Activated T-helper 1 cell treated with anti-CD3 and anti-CD28 coated beads, Interleukin-12 subunit alpha, Interleukin-12 subunit beta, Interleukin-2, Interleukin-4 antibody, amounts not matched to agents 30 ng/mL and 10 ng/mL and 1 ng/mL, durations not matched to agents 14 hours and 24 hours and 36 hours (primary cell): ENCODE measurements at regions of chr17 and their contacts with region 1.

Region 1: DNA sequence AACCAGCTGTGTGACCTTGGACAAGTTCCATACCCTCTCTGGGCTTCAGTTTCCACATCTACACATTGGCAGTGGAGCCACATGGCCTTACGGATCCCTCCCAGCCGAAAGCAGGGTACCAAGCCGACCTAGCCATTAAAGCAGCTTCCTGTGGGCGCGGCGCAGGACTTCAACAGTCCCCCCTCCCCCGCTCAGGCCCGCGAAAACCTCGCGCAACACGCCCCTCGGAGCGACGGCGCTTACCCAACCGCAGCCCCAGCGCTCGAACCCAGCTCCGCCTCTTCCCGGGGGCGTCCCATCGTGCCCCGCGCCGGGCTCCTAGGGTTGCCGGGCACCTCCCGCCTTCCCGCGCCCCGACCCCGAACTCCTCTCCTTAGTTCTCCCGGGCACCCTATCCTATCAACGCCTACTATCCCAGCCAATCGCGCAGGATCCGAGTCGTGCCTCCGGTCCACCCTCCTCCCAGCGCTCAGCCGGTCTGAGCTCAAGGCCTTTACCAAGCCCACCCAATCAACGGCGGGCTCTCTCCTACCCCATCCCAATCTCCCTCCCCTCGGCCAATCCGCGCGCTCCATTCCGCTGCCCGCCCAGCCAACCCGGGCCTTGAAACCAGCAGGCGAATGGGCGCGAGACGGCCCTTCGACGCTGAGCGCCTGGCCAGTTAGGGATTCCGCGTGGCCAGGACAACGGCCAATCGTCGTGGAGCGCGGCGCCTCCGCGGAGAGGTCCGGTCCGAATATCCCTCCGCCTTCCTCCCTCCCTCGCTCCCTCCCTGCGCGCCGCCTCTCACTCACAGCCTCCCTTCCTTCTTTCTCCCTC is at the start of gene KPNB1:
- DNase-seq: peak; percentile 98
- H3K4me3 Mint-ChIP-seq: peak within 1 kb of the TSS; percentile 98
- H3K27ac Mint-ChIP-seq: peak within 1 kb of the TSS; percentile 96
- H3K4me1 Mint-ChIP-seq: peaks cover 33% of the 10 kb centered on the region
- H3K27me3 Mint-ChIP-seq: no peaks in the 10 kb centered on the region
- total RNA-seq, gene KPNB1: 718 and 719 TPM in 2 replicates

Region 2: GRCh38 chr17:47615766-47616424 is 33.5 kb before region 1 on chr17:
- intact Hi-C with region 1: loop called (anchors 1 kb)
- DNase-seq: no peak
- H3K4me3 Mint-ChIP-seq: no peak overlapping the region
- H3K27ac Mint-ChIP-seq: no peak overlapping the region
- H3K4me1 Mint-ChIP-seq: peaks cover 27% of the 10 kb centered on the region
- H3K27me3 Mint-ChIP-seq: no peaks in the 10 kb centered on the region

Region 3: DNA sequence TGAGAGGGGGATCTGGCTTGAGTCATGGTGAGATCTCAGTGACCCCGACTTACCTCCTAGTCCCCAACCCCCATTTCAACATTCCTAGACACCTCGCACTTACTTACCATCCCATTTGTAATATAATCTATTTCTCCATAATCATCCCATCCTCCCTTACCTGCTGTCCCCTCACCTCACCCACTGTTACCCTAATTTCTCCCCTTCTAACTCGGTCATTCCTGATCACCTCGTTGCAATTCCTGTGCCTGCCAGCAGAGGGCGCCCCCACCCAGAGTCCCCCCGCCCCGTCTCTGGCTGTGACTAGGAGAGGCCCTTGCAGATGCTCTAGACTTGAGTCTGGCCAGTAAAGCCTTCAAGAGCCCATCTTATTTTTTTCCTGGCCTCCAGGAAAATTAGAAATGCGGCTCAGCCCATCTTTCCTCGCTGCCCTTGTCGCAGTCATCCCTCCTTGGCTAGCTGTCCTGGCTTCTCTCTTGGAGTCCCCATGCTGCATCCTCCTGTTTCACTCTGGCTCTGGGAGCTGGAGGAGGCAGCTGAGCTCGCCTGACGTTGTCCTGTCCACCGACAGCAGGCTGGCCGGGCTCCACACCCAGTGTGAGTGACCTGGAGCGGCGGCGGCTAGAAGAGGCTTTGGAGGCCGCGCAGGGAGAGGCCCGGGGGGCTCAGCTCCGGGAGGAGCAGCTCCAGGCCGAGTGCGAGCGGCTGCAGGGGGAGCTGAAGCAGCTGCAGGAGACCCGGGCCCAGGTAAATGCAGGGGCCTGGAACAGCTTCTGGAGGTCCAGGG is 49.6 kb after region 1 on chr17:
- intact Hi-C with region 1: loop called (anchors 2 kb)
- DNase-seq: peak; percentile 64
- H3K4me3 Mint-ChIP-seq: no peak overlapping the region
- H3K27ac Mint-ChIP-seq: no peak overlapping the region
- H3K4me1 Mint-ChIP-seq: peaks cover 68% of the 10 kb centered on the region
- H3K27me3 Mint-ChIP-seq: no peaks in the 10 kb centered on the region

Region 4: DNA sequence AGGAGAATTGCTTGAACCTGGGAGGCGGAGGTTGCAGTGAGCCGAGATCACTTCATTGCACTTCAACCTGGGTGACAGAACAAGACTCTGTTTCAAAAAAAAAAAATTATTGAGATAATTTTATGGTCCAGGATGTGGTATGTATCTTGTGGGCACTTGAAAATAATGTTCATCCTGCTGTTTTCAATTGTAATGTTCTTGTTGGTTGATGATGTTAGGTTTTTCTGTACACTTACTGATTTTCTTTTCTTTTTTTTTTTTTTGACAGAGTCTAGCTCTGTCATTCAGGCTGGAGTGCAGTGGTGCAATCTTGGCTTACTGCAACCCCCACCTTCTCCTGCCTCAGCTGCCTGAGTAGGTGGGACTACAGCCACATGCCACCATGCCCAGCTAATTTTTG is 113.4 kb after region 1 on chr17:
- intact Hi-C with region 1: no loop called
- DNase-seq: no peak
- H3K4me3 Mint-ChIP-seq: no peak overlapping the region
- H3K27ac Mint-ChIP-seq: no peak overlapping the region
- H3K4me1 Mint-ChIP-seq: peaks cover 6% of the 10 kb centered on the region
- H3K27me3 Mint-ChIP-seq: peaks cover 43% of the 10 kb centered on the region

Region 5: GRCh38 chr17:47789611-47790561 is 140.5 kb after region 1 on chr17:
- intact Hi-C with region 1: no loop called
- DNase-seq: peak; percentile 44
- H3K4me3 Mint-ChIP-seq: peak overlapping the region; percentile 64
- H3K27ac Mint-ChIP-seq: no peak overlapping the region
- H3K4me1 Mint-ChIP-seq: no peaks in the 10 kb centered on the region
- H3K27me3 Mint-ChIP-seq: peaks cover 70% of the 10 kb centered on the region

Region 6: GRCh38 chr17:47831003-47831933 is 181.9 kb after region 1 on chr17 and contains the starts of genes LRRC46 and MRPL10:
- intact Hi-C with region 1: loop called (anchors 1 kb)
- DNase-seq: peak; percentile 92
- H3K4me3 Mint-ChIP-seq: peak within 1 kb of the TSS; percentile 90
- H3K27ac Mint-ChIP-seq: peak within 1 kb of the TSS; percentile 88
- H3K4me1 Mint-ChIP-seq: peaks cover 43% of the 10 kb centered on the region
- H3K27me3 Mint-ChIP-seq: peaks cover 1% of the 10 kb centered on the region
- total RNA-seq, gene LRRC46: 0.39 and 0.70 TPM in 2 replicates
- total RNA-seq, gene MRPL10: 53.6 and 56.9 TPM in 2 replicates

Region 7: DNA sequence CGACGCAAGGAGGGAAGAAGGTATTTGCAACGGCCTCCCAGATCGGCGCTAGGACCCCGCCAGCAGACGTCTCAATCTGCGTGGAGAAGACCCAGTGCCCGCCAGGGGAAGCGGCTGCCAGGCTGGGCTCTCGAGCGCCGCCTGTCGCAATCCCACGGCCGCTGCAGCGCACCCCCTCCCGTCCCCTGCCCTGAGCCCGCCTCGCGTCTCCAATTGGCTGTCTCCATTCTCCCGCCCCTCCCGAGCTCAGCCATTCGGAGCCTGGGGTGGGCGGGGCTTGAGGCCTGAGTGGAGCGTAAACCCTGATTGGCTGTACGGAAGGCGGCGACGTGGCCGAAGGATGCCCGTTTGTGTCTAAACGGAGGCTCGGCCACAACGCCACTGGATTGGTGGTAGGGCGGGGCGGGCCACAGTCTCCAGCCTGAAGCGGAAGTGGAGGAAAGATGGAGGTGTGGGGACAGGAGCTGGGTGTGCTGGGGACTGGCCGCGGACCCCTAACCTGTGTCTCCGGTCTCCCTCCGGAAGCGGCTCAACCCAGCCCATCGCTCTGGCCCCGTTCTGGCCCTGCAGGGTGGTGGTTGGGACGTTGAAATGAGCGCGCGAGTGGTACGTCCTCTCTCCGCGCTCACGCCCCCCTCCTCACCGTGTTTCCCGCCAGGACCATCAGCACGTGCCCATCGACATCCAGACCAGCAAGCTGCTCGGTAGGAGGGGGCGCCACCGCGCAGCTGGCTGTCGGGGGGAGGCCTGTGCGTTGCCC is 321.5 kb after region 1 on chr17 and contains the start of gene CDK5RAP3:
- intact Hi-C with region 1: loop called (anchors 1 kb)
- DNase-seq: peak; percentile 100
- H3K4me3 Mint-ChIP-seq: peak within 1 kb of the TSS; percentile 89
- H3K27ac Mint-ChIP-seq: peak within 1 kb of the TSS; percentile 93
- H3K4me1 Mint-ChIP-seq: peaks cover 31% of the 10 kb centered on the region
- H3K27me3 Mint-ChIP-seq: peaks cover 2% of the 10 kb centered on the region
- total RNA-seq, gene CDK5RAP3: 190 and 200 TPM in 2 replicates

Region 8: GRCh38 chr17:48830840-48831548 is 1181.6 kb after region 1 on chr17 and contains the start of gene CALCOCO2:
- intact Hi-C with region 1: loop called (anchors 10 kb)
- DNase-seq: peak; percentile 85
- H3K4me3 Mint-ChIP-seq: peak within 1 kb of the TSS; percentile 93
- H3K27ac Mint-ChIP-seq: peak within 1 kb of the TSS; percentile 97
- H3K4me1 Mint-ChIP-seq: peaks cover 50% of the 10 kb centered on the region
- H3K27me3 Mint-ChIP-seq: peaks cover 12% of the 10 kb centered on the region
- total RNA-seq, gene CALCOCO2: 50.3 and 57.9 TPM in 2 replicates